Aorta (tissue), 5 donors: ENCODE measurements at regions of chr16 and their contacts with region 1.

Region 1: DNA sequence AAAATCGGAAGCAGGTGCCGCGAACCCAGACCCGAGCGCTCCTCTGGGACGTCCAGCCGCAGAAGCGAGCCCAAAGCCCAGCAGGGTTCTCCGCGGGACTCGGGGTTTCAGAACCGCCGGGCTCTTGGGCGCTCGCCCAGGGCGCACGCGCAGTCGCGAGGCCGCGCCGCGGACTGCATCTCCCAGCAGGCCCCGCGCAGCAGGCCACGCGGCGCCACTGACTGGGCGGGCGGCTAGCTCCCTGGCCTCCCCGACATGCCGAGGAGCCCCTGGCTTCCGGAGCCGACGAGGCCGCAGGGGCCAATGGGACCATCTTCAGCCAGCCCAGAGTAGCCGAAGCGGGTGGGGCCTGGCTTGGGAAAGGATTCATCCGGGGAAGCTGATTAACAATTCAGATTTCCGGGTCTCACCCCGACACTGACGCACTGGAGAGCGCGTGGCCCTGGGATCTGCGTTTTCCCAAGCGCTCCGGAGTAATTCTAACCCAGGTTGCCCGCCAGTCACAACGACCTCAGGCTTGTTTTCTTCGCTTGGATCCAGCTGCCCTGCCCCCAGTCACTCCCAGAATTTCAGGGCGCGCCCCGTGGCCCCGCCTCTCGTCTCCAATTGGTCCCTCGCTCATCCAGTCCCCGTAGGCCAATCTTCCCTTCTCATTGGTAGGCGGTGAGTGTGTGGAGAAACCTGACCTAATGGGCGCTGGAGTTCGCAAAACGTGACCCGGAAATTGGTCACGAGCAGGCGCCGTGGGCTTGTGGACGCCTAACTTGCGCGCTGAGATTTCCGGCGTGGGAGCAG is at the start of gene ZNF263:
- DNase-seq: peak; percentile 97 to 98
- ATAC-seq: peak; percentile 98
- H3K4me3 ChIP-seq: peak within 1 kb of the TSS; percentile 77 to 80
- H3K27ac ChIP-seq: peak within 1 kb of the TSS; percentile 84 to 93
- H3K4me1 ChIP-seq: no peaks in the 10 kb centered on the region
- H3K27me3 ChIP-seq: no peaks in the 10 kb centered on the region
- total RNA-seq, gene ZNF263: 26.2 to 27.4 TPM

Region 2: DNA sequence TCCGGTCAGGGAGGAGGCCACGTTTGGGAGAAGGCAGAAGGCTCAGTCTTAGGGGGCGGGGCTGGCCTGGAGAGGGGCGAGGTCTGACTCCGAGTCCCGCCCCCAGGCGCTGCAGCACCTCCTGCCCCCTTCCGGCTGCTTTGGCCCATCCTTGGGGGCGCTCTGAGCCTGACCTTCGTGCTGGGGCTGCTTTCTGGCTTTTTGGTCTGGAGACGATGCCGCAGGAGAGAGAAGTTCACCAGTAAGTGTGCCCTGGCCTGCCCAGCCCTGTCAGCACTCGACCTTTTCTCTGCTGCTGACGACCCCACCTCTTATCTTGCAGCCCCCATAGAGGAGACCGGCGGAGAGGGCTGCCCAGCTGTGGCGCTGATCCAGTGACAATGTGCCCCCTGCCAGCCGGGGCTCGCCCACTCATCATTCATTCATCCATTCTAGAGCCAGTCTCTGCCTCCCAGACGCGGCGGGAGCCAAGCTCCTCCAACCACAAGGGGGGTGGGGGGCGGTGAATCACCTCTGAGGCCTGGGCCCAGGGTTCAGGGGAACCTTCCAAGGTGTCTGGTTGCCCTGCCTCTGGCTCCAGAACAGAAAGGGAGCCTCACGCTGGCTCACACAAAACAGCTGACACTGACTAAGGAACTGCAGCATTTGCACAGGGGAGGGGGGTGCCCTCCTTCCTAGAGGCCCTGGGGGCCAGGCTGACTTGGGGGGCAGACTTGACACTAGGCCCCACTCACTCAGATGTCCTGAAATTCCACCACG is 261.3 kb before region 1 on chr16:
- intact Hi-C with region 1: loop called in 1 of 2 experiments (anchors 2 kb)
- DNase-seq: peak; percentile 92 to 96
- ATAC-seq: peak; percentile 64
- H3K4me3 ChIP-seq: peak overlapping the region; percentile 71 to 82
- H3K27ac ChIP-seq: peak overlapping the region; percentile 88 to 98
- H3K4me1 ChIP-seq: no peaks in the 10 kb centered on the region
- H3K27me3 ChIP-seq: peaks cover 0 to 2% of the 10 kb centered on the region in 2 donors

Region 3: DNA sequence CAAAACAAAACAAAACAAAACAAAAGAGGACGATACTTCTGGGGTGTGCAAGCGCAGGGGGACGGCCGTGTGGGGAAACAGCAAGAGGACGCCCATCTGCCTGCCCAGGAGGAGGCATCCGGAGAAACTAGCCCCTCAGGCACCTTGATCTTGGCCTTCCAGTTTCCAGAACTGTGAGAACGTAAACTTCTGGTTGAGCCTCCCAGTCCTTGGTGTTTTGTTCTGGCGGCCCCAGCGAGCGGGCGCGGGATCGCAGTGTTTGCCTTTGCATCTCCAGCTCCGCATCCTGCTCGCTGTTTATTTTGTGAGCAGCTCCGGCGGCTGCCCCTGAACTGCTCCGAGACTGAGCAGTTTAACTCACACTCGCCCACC is 237.6 kb before region 1 on chr16:
- intact Hi-C with region 1: no loop called
- DNase-seq: no peak
- ATAC-seq: no peak
- H3K4me3 ChIP-seq: no peak overlapping the region
- H3K27ac ChIP-seq: no peak overlapping the region
- H3K4me1 ChIP-seq: no peaks in the 10 kb centered on the region
- H3K27me3 ChIP-seq: no peaks in the 10 kb centered on the region

Region 4: GRCh38 chr16:3223913-3224515 is 58.9 kb before region 1 on chr16:
- intact Hi-C with region 1: no loop called
- DNase-seq: no peak
- ATAC-seq: no peak
- H3K4me3 ChIP-seq: peak overlapping the region in 1 of 2 donors; percentile 31
- H3K27ac ChIP-seq: no peak overlapping the region
- H3K4me1 ChIP-seq: no peaks in the 10 kb centered on the region
- H3K27me3 ChIP-seq: no peaks in the 10 kb centered on the region

Region 5: DNA sequence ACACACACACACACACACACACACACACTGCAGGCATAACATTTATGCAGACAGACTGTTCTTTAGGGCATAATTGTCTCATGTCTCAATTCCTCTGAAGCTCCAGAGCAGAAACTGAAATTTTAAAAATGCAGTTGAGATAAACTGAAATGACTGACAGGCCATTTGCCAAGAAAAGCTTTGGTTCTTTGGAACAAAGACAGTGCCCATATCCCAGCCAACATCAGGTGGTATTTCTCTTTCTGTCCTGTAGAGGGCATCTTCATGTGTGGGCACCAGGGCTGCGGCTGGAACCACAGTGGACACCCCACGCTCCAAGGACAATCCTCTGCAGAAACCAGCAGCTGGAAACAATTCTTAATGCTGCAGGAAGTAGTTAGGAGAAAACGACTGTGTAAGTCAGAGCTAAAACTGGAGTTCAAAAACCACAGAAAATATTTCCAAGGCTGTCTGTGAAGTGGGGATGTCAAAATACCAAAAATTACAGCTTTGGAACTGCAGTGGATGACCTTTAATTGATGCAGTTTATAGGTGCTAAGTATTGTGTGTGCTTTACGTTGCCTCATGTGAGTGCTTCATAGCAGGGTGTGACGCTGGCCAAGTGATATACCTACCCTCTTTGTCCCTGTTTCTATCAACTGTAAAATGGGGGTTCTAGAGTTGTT is 15.9 kb before region 1 on chr16:
- intact Hi-C with region 1: loop called in 1 of 2 experiments (anchors 2 kb)
- DNase-seq: peak in 1 of 2 donors; percentile 66
- ATAC-seq: no peak
- H3K4me3 ChIP-seq: no peak overlapping the region
- H3K27ac ChIP-seq: no peak overlapping the region
- H3K4me1 ChIP-seq: no peaks in the 10 kb centered on the region
- H3K27me3 ChIP-seq: no peaks in the 10 kb centered on the region

Region 6: DNA sequence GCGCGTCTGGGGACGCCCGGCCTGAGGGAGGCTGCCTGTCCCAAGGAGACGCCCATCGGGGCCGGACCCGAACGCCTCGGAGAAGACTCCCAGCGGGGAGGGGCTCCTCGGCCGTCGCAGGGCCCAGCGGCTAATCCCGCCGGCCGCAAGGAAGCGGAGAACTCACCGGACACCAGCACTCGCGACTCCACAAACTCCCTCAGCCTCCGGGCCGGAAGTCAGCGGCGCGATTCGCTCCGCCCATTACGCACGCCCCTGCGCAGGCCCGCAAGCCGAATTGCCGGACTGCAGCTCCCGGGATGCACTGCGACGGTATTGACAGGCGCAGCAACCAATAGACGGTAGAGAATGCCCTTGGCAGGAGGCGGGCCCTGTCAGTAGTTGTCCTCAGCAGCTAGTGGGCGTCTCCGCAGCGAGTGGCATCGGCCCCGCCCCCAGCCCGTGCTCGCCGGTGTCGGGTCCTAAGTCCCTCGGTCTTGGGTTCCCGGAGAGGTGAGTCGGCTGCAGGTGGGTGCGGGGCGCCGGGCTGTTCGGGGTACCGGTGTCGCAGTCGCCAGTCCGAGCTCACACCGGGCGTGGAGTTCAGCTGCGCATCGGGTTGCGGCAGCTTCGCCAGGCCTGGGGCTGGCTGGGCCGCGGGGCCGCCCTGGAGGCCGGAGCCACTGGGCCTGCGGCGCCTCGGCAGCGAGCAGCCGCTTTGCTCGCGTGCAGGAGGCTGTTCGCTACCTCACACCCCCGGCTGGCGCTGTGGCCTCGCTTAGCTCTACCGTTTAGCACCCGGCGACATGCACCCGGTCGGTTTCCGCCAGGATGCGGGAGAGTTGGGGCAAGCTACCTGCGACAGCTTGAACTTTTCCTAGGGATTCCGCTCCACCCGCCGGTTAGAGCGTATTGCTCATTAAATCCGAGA is 118.1 kb after region 1 on chr16 and contains the starts of genes ZNF174 and ZSCAN32:
- intact Hi-C with region 1: loop called in 1 of 2 experiments (anchors 5 kb)
- DNase-seq: peak; percentile 99
- ATAC-seq: peak; percentile 100
- H3K4me3 ChIP-seq: peak within 1 kb of the TSS; percentile 66 to 90
- H3K27ac ChIP-seq: peak within 1 kb of the TSS in 1 of 2 donors; percentile 47
- H3K4me1 ChIP-seq: peaks cover 0 to 2% of the 10 kb centered on the region in 2 donors
- H3K27me3 ChIP-seq: no peaks in the 10 kb centered on the region
- total RNA-seq, gene ZNF174: 8.2 to 10.9 TPM
- total RNA-seq, gene ZSCAN32: 11.4 to 14.1 TPM

Region 7: DNA sequence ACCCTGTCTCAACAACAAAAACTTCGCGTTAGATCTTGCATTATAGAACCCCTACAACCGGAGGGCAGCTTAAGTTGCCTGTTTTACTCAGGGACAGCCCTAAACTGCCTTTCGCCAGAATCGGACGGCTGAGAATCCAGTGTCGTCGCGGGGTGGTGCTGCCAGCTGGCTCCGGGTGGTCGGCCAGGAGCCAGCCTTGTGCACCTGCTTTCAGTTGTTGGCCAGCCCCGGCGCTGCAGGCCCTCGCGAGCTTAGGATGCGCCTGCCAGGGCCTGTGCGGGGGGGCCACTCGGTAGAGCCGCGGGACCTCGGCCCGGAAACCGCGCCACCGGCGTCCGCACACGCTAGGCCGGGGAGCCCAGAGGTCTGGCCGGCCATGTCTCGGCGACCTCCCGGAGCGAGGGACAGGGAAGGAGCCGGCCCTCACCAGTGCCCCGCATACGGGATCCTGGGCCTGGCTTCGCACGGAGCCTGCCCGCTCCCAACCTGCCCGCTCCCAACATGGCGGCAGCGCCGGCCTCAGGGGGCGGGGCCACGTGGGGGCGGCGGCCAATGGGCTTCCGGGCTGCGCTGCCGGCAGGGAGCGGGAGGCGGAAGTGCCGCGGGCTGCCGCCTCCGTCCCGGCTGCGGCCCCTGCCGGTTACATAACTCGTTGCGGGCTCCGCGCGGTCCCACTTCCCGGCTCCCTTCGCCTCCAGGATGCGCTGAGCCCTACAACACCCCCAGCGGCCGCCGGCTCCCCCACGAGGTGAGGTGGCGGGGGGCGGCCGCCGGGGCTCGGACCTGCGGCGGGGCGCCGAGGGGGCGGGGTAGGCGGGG is 174.7 kb after region 1 on chr16:
- intact Hi-C with region 1: loop called (anchors 5 to 10 kb)
- DNase-seq: peak; percentile 93 to 95
- ATAC-seq: peak; percentile 97
- H3K4me3 ChIP-seq: peak overlapping the region; percentile 84 to 91
- H3K27ac ChIP-seq: peak overlapping the region; percentile 46 to 92
- H3K4me1 ChIP-seq: no peaks in the 10 kb centered on the region
- H3K27me3 ChIP-seq: no peaks in the 10 kb centered on the region